ENCODE measurements at regions of chr3 and their contacts with region 1.

Region 1: DNA sequence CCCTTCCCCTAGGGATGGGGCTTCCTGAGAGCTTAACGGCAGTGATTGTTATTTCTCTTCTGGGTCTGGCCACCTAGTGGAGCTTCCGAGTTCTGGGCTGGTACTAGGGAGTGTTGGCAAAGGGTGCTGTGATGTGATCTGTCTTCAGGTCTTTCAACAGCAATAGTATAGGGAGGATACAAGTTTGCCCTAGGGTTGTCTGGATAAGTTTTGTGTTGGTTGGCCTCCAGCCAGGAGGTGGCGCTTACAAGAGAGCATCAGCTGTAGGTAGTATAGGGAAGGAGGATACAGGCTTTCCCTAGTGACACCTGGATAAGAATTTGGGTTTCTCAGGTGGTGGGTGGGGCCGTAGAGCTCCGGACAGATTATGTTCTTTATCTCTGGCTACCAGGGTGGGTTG is 19.2 kb upstream of the CPOX start:
- DNase-seq: peak in 1 of 5 donors; percentile 26
- ATAC-seq: peak in 1 of 4 donors; percentile 18
- H3K4me3 ChIP-seq: no peak overlapping the region
- H3K27ac ChIP-seq: peak overlapping the region in 1 of 12 donors; percentile 39
- H3K4me1 ChIP-seq: no peaks in the 10 kb centered on the region
- H3K27me3 ChIP-seq: no peaks in the 10 kb centered on the region
- CTCF ChIP-seq: no peak
- POLR2A ChIP-seq: no peak

Region 2: GRCh38 chr3:98540346-98540745 is 72.2 kb before region 1 on chr3:
- intact Hi-C with region 1: no loop called
- DNase-seq: no peak
- ATAC-seq: no peak
- H3K4me3 ChIP-seq: no peak overlapping the region
- H3K27ac ChIP-seq: no peak overlapping the region
- H3K4me1 ChIP-seq: no peaks in the 10 kb centered on the region
- H3K27me3 ChIP-seq: no peaks in the 10 kb centered on the region
- CTCF ChIP-seq: no peak
- POLR2A ChIP-seq: no peak

Region 3: DNA sequence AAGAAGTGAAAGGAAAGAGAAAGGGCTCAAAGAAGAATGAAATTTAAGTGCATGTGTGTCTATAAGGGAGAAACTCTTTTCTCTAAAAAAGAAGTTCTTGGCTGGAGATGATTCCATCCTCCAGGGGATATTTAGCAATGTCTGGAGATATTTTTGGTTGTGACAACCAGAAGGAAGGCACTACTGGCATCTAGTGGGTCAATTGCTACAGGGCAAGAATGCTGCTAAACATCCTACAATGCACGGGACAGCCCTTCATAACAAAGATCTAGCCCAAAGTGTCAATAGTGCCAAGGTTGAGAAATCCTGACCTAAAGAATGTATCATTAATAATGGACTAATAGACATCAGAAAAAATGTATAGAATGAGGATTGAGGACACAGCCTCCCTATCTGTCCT is 93.1 kb after region 1 on chr3:
- intact Hi-C with region 1: loop called in 2 of 10 experiments (anchors 10 kb)
- DNase-seq: no peak
- ATAC-seq: no peak
- H3K4me3 ChIP-seq: no peak overlapping the region
- H3K27ac ChIP-seq: no peak overlapping the region
- H3K4me1 ChIP-seq: peaks cover 0 to 27% (median 10%) of the 10 kb centered on the region in 12 donors
- H3K27me3 ChIP-seq: no peaks in the 10 kb centered on the region
- CTCF ChIP-seq: peak in 2 of 12 donors; percentile 17 to 25
- POLR2A ChIP-seq: no peak

Region 4: GRCh38 chr3:98994128-98994762 is 381.7 kb after region 1 on chr3:
- intact Hi-C with region 1: loop called in 1 of 10 experiments (anchors 5 kb)
- DNase-seq: no peak
- ATAC-seq: peak in 2 of 4 donors; percentile 29 to 48
- H3K4me3 ChIP-seq: no peak overlapping the region
- H3K27ac ChIP-seq: no peak overlapping the region
- H3K4me1 ChIP-seq: no peaks in the 10 kb centered on the region
- H3K27me3 ChIP-seq: no peaks in the 10 kb centered on the region
- CTCF ChIP-seq: peak; percentile 45 to 81 (median 72)
- POLR2A ChIP-seq: no peak

Measured in heart left ventricle (tissue), 16 donors.